AG04449 (cell line): ENCODE measurements at regions of chr12 and their contacts with region 1.

Region 1: GRCh38 chr12:12376646-12377448 is 20.0 kb downstream of the BORCS5 start:
- DNase-seq: peak; percentile 52
- H3K4me3 ChIP-seq: no peak overlapping the region
- CTCF ChIP-seq: peak; percentile 43

Region 2: DNA sequence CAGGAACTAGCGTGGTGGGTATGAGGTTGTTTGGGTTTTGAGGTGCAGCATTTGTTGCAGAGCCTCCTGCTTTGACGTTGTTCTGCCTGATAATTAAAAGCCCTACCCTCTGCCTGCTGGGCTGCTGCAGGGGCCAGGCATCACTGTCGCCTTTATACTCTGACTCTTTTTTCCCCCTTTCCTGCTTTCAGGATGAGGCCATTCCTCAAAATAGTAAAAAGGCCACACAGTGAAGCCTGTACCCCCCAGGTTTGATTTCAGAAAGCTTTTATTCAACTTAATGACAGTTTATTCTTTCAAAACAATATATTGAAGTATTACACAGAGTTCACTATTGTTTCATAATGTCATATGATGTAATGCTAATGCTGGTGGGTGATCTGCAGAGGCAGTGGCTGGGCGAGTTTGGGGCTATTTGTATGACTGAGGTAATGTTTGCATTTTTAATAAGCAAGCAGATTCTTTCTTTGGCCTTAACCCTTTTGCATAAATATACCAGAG is 10.9 kb before region 1 on chr12:
- CTCF ChIA-PET with region 1: interaction called, 12 read pairs
- POLR2A ChIA-PET with region 1: no interaction called
- DNase-seq: no peak
- H3K4me3 ChIP-seq: no peak overlapping the region
- CTCF ChIP-seq: no peak

Region 3: GRCh38 chr12:12661086-12661485 is 284.2 kb after region 1 on chr12:
- CTCF ChIA-PET with region 1: interaction called, 89 read pairs
- POLR2A ChIA-PET with region 1: no interaction called
- DNase-seq: peak; percentile 65
- H3K4me3 ChIP-seq: no peak overlapping the region
- CTCF ChIP-seq: no peak

Region 4: GRCh38 chr12:12696562-12697383 is 319.9 kb after region 1 on chr12:
- CTCF ChIA-PET with region 1: interaction called, 122 read pairs
- POLR2A ChIA-PET with region 1: no interaction called
- DNase-seq: peak; percentile 17
- H3K4me3 ChIP-seq: peak overlapping the region; percentile 64
- CTCF ChIP-seq: no peak

Region 5: GRCh38 chr12:12704593-12705230 is 327.9 kb after region 1 on chr12:
- CTCF ChIA-PET with region 1: interaction called, 122 read pairs
- POLR2A ChIA-PET with region 1: no interaction called
- DNase-seq: peak; percentile 86
- H3K4me3 ChIP-seq: no peak overlapping the region
- CTCF ChIP-seq: peak; percentile 78

Region 6: DNA sequence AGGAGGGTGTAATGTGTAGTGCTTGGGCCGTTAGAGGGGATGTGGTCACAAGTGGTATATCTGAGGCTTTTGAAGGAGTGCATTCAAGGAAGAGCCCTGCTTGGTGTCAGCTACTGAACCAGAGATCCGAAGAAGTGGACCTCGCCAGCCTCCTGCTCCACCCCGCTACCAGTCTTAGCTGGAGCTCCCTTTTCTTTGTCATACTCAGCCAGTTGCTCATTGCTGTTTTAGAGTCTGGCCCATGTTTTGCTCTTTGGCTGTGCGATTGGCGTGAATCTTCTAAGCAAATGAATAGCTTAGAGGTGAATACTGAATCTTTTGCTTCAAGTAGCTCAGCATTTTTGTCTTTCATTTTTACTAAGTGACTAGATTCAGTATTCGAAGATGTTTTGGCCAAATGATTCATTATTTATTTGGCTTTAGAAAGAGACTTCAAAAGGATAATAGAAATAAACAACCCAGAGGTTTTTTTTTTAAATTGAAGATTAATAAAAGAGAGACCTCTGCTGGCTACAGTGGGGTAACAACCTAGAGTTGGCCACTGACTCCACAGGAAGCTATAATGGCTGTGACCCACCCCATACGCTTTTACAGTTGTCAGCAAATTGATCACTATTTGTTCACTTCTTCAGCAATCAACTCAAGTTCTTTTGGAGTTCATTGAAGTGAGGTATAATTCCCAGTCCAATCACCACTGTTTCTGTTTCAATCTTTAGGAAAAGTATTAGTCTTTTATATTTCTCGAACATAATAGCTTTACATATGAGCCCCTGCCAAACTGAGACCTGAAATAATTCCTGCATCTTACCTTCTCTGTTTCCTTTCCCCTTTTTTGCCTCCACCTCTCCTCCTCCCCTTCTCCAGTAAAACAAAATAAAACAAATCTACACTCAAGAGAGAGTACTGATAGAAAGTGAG is 360.2 kb after region 1 on chr12:
- CTCF ChIA-PET with region 1: interaction called, 10 read pairs
- POLR2A ChIA-PET with region 1: no interaction called
- DNase-seq: no peak
- H3K4me3 ChIP-seq: peak overlapping the region; percentile 16; the same call in 1 of the 2 replicates
- CTCF ChIP-seq: peak; percentile 36